Posterior cingulate gyrus (tissue), 11 donors: ENCODE measurements at regions of chr17 and their contacts with region 1.

Region 1: DNA sequence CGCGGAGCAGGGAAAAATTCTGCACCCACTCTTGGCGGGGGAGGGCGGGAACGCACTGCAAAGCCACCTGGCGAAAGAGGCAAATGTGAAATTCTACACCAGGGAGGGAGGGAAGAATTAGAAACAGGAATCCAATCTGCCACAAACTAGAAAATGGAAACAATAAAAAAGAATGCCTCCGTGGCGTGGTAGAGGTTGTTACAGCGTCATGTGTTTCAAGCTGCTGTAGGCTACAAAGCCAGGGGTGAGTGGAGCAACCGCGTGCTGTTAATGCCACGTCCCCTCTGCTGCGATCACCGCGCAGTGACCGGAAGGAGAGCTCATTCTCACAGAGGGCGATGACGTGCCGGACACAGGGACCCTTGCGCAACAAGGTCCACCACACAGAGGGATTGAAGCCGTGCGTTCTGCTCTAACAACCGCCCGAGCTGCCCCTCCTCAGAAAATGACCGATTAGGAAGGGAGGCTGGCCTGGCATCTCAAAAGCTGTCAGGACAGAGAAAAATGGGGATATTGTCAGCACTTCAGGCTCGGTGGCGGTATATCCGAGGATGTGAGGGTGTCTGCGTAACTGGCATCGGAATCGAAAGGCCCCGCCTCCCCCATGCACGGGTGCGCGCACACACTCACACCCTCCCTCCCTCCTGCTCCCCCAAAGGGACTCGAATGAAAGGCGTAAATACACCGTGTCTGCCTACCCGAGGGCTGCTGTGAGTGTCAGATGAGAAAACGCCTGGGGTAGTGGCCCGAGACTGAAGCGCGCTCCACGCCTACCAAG is 70.8 kb upstream of the TNRC6C start:
- DNase-seq: peak in 9 of 10 donors; percentile 52 to 94 (median 66)

Region 2: GRCh38 chr17:77645072-77646045 is 242.3 kb before region 1 on chr17:
- intact Hi-C with region 1: no loop called
- DNase-seq: no peak

Region 3: GRCh38 chr17:77957857-77958715 is 70.4 kb after region 1 on chr17 and contains the start of gene TNRC6C:
- intact Hi-C with region 1: loop called (anchors 5 kb)
- DNase-seq: peak; percentile 99 to 100 (median 100)